ENCODE measurements at regions of chr17 and their contacts with region 1.

Region 1: GRCh38 chr17:13735444-13735843 is 133.7 kb upstream of the HS3ST3A1 start:
- DNase-seq: no peak
- ATAC-seq: no peak
- H3K4me3 ChIP-seq: no peak overlapping the region
- H3K27ac ChIP-seq: no peak overlapping the region
- H3K4me1 ChIP-seq: no peaks in the 10 kb centered on the region
- H3K27me3 ChIP-seq: no peaks in the 10 kb centered on the region
- CTCF ChIP-seq: no peak
- POLR2A ChIP-seq: no peak

Region 2: GRCh38 chr17:13619462-13619861 is 116.0 kb before region 1 on chr17:
- intact Hi-C with region 1: loop called in 1 of 10 experiments (anchors 10 kb)
- DNase-seq: no peak
- ATAC-seq: no peak
- H3K4me3 ChIP-seq: no peak overlapping the region
- H3K27ac ChIP-seq: no peak overlapping the region
- H3K4me1 ChIP-seq: no peaks in the 10 kb centered on the region
- H3K27me3 ChIP-seq: no peaks in the 10 kb centered on the region
- CTCF ChIP-seq: no peak
- POLR2A ChIP-seq: no peak

Measured in heart left ventricle (tissue), 16 donors.